ENCODE measurements at regions of chr6 and their contacts with region 1.

Region 1: GRCh38 chr6:110873981-110874879 is at the start of gene AMD1:
- DNase-seq: peak; percentile 87 to 96
- ATAC-seq: peak; percentile 86 to 89
- H3K4me3 ChIP-seq: peak within 1 kb of the TSS; percentile 86
- H3K27ac ChIP-seq: peak within 1 kb of the TSS; percentile 94 to 99
- H3K4me1 ChIP-seq: peaks cover 25% of the 10 kb centered on the region
- CTCF ChIP-seq: no peak
- EP300 ChIP-seq: no peak
- POLR2A ChIP-seq: peak; percentile 97
- RAD21 ChIP-seq: no peak
- polyA plus RNA-seq, gene AMD1: 106 and 147 TPM in 2 replicates

Region 2: DNA sequence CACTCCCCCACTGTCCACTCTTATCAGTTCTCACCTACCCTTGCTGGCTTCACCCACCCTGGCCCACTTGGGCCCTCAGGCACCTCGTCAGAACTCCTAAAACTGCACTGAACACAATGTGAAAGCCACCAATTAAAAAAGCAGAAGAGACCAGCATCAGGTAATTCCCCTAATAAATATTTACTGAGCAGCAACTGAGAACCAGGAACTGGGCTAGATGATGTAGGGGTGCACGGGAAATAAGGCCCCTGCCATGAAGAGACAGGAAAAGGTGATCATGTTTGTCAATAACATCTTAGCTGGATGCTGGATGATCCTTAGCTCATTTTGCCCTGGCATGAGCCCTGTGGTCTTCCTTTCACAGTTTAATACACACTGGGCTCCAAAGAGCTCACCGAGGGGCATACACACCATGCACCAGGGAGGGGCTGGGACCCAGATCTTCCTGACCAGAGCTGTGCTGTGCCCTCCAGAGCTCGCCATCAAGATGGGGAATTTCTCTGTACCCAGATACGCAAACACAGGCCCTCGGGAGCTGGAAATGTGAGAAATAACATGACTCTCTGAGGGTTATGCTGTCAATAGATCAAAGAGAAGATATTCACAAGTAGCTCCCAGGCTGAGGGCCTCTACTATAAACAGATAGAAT is 284.2 kb before region 1 on chr6:
- CTCF ChIA-PET with region 1: no interaction called
- POLR2A ChIA-PET with region 1: no interaction called
- DNase-seq: no peak
- ATAC-seq: no peak
- H3K4me3 ChIP-seq: no peak overlapping the region
- H3K27ac ChIP-seq: no peak overlapping the region
- H3K4me1 ChIP-seq: no peaks in the 10 kb centered on the region
- CTCF ChIP-seq: no peak
- EP300 ChIP-seq: no peak
- POLR2A ChIP-seq: no peak
- RAD21 ChIP-seq: no peak

Region 3: DNA sequence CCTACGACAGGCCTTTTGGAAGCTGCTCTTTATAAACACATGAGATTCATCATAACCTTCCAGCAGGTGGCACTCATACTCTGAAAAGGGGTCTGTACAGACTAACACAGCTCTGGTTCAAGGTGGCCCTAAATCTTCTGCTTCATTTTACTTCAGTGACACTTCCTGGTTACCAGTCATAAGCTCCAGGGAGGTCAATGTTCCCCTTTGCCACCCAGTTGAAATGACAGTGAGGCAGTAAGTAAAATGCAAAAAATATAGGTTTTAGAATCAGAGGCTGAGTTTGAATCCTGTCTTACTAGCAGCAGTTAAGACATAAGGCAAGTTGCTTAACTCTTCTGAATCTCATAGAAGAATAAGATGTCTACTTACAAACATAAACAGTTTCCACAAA is 191.8 kb before region 1 on chr6:
- CTCF ChIA-PET with region 1: interaction called, 19 read pairs
- POLR2A ChIA-PET with region 1: interaction called, 17 read pairs
- DNase-seq: peak; percentile 35 to 83
- ATAC-seq: peak; percentile 95 to 99
- H3K4me3 ChIP-seq: no peak overlapping the region
- H3K27ac ChIP-seq: peak overlapping the region; percentile 60 to 64; a peak in 3 of 6 replicates
- H3K4me1 ChIP-seq: peaks cover 20% of the 10 kb centered on the region
- CTCF ChIP-seq: peak; percentile 74
- EP300 ChIP-seq: no peak
- POLR2A ChIP-seq: no peak
- RAD21 ChIP-seq: peak; percentile 86 to 91

Region 4: GRCh38 chr6:110815217-110816109 is 58.8 kb before region 1 on chr6 and contains the start of gene CDK19:
- CTCF ChIA-PET with region 1: interaction called, 5 read pairs
- POLR2A ChIA-PET with region 1: interaction called, 162 read pairs
- DNase-seq: peak; percentile 92 to 98
- ATAC-seq: peak; percentile 93 to 94
- H3K4me3 ChIP-seq: peak within 1 kb of the TSS; percentile 98
- H3K27ac ChIP-seq: peak within 1 kb of the TSS; percentile 83 to 95
- H3K4me1 ChIP-seq: peaks cover 16% of the 10 kb centered on the region; the same call in 2 of the 3 replicates
- CTCF ChIP-seq: no peak
- EP300 ChIP-seq: no peak
- POLR2A ChIP-seq: peak; percentile 70
- RAD21 ChIP-seq: no peak
- polyA plus RNA-seq, gene CDK19: 17.3 and 18.6 TPM in 2 replicates

Region 5: DNA sequence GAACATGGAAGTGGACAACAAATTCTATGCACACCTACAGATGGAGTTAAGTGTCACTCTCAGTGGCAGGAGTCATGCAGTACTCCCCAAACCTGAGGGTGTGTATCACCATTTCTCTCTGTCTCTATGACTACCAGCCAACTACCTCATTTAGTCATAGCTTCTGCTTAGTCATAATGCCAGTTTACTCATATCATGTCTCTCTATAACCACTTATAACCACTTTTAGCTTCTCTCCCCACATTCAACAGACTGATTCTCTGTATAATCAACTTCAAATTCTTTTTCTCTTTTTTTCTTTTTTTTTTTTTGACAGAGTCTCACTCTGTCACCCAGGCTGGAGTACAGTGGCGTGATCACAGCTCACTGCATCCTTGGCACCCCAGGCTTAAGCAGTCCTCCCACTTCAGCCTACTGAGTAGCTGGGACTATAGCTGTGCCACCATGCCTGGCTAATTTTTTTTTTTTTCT is 70.5 kb after region 1 on chr6:
- CTCF ChIA-PET with region 1: interaction called, 6 read pairs
- POLR2A ChIA-PET with region 1: interaction called, 24 read pairs
- DNase-seq: peak; percentile 70 to 86
- ATAC-seq: peak; percentile 95 to 100
- H3K4me3 ChIP-seq: no peak overlapping the region
- H3K27ac ChIP-seq: peak overlapping the region; percentile 80 to 89
- H3K4me1 ChIP-seq: peaks cover 36% of the 10 kb centered on the region
- CTCF ChIP-seq: no peak
- EP300 ChIP-seq: no peak
- POLR2A ChIP-seq: no peak
- RAD21 ChIP-seq: no peak

Region 6: DNA sequence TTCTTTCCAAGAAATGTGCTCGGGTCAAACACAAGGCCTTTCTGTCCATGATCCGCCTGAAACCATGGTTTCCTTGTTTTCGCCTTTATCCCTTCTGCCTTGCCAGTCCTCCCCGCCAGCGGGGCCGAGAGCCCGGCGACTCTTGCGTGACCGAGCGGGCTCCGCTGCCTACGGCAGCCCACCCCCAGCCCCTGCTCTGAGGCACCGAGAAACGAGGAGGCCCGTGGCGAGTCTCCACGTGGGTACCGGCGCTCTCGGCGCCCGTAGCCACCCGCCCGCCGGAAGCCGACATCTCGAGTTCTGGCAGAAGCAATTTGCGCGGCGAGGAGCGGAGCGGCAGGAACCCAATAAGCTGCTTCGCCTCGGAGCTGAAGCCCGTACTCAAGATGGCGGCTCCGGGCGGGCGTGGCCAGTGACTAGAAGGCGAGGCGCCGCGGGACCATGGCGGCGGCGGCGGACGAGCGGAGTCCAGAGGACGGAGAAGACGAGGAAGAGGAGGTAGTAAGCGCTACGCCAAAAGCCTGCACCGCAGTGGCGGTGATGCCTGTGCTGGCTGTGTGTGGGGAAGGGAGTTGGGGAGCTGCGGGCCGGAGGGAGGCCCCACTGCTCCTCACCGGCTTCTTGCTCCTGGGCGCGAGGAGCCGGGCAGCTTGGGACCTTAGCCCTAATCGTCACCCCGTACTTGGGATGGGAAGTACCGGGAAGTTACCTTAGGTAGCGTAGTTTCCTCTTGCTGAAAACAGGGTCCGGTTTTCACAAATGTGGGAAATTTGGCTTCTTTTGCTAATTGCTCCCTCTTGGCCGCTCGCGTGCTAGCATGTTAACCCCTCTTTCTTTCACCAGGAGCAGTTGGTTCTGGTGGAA is 84.3 kb after region 1 on chr6 and contains the start of gene GTF3C6:
- CTCF ChIA-PET with region 1: no interaction called
- POLR2A ChIA-PET with region 1: interaction called, 24 read pairs
- DNase-seq: peak in 1 of 2 experiments; percentile 92
- ATAC-seq: peak; percentile 99
- H3K4me3 ChIP-seq: peak within 1 kb of the TSS; percentile 83
- H3K27ac ChIP-seq: peak within 1 kb of the TSS; percentile 99 to 100
- H3K4me1 ChIP-seq: peaks cover 21% of the 10 kb centered on the region
- CTCF ChIP-seq: no peak
- EP300 ChIP-seq: no peak
- POLR2A ChIP-seq: peak; percentile 91
- RAD21 ChIP-seq: no peak; a peak in 1 of 5 replicates
- polyA plus RNA-seq, gene GTF3C6: 59.9 and 105 TPM in 2 replicates

Region 7: GRCh38 chr6:110981202-110981600 is 107.0 kb after region 1 on chr6:
- CTCF ChIA-PET with region 1: no interaction called
- POLR2A ChIA-PET with region 1: interaction called, 12 read pairs
- DNase-seq: no peak
- ATAC-seq: no peak
- H3K4me3 ChIP-seq: peak overlapping the region; percentile 82
- H3K27ac ChIP-seq: peak overlapping the region; percentile 89 to 96
- H3K4me1 ChIP-seq: peaks cover 8% of the 10 kb centered on the region
- CTCF ChIP-seq: no peak
- EP300 ChIP-seq: no peak
- POLR2A ChIP-seq: no peak
- RAD21 ChIP-seq: no peak